ENCODE measurements at regions of chr10 and their contacts with region 1.

Region 1: DNA sequence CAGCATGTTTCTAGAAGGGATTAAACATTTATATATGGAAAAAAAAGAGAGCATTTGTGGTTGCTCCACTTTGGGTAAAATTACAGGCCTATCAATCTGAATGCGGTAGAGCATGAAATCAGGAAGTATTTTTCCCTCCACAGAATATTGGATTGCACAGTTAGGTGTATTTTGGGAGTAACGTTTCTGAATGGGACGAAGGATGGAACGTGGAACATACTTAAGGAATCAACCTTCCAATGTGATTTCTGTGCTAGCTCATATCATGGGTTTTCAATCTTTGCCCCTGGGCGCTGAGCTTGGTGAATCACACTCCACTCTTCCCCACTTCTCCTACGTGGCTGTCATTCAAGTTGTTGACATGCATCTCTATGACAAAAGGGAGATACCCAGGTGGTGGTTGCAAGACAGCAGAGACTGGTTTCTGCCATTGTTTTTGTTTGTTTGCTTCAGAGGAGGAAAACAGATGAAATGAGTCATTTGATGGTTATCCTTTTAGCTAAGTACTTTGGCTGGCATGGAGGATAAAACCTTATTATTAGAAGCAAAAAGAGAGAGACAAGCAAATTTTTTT is 573.8 kb downstream of the GATA3 start:
- DNase-seq: no peak

Region 2: GRCh38 chr10:6920072-6921019 is 1707.9 kb before region 1 on chr10:
- intact Hi-C with region 1: no loop called
- DNase-seq: peak; percentile 90

Region 3: DNA sequence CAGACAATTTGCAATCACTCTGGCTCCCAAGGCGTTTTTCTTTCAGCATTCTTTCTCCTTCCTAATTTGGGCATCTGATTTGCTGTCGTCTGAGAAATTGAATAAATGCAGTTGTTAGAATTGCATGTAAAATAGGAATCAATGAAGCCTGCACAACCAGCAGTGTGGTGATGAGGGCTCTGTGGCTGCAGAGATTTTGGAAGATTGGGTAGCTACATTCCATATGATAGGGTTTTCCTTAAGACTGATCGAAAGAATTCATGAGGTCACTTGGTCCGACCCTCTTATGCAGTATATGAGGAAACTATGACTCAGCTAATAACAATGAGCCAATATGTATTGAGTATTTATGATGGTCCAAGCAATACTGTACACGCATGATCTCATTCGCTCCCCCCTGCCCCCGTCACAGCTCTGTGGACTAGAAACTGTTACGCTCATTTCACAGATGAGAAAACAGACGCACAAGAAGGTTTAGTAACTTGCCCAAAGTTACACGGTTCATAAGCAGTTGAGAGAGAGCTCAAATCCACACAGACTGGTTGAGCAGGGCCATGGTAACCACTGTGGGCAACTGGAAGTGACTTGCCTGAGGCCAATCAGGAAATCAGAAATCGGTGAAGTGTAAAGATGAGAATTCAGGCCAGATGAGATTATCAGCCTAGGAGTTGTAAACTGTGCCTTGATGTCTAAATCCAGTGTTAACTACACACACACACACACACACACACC is 46.6 kb before region 1 on chr10:
- intact Hi-C with region 1: loop called in 1 of 2 experiments (anchors 2 kb)
- DNase-seq: no peak

Measured in posterior vena cava (tissue), 2 donors.